HCT116 (cell line): ENCODE measurements at regions of chr5 and their contacts with region 1.

Region 1: GRCh38 chr5:58842852-58843251 is 260.0 kb downstream of the RAB3C start:
- DNase-seq: no peak
- ATAC-seq: no peak
- H3K4me3 ChIP-seq: no peak overlapping the region
- H3K27ac ChIP-seq: no peak overlapping the region
- H3K4me1 ChIP-seq: no peaks in the 10 kb centered on the region
- H3K27me3 ChIP-seq: no peaks in the 10 kb centered on the region
- CTCF ChIP-seq: no peak
- POLR2A ChIP-seq: no peak
- RAD21 ChIP-seq: no peak

Region 2: DNA sequence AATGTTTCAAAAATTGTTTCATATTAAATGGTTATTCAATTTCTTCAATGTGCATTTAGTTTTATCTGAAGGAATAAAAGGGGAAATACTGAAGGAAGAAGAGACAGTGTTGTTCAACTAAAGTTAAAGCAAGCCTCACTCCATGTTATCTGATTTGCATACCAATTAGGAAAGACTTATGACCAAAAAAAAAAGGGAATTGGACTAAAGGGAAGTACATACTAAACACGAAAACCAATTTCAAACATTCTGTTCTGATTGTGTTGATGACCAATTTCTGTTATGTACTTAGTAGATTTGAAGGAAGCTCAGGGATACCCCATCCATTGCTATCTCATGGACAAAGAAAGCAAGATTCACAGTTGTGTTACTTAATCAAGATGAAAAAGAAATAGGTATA is 356.6 kb before region 1 on chr5:
- CTCF ChIA-PET with region 1: no interaction called
- POLR2A ChIA-PET with region 1: no interaction called
- RAD21 ChIA-PET with region 1: no interaction called
- intact Hi-C with region 1: loop called (anchors 5 kb)
- DNase-seq: no peak
- ATAC-seq: no peak
- H3K4me3 ChIP-seq: no peak overlapping the region
- H3K27ac ChIP-seq: no peak overlapping the region
- H3K4me1 ChIP-seq: no peaks in the 10 kb centered on the region
- H3K27me3 ChIP-seq: peaks cover 11% of the 10 kb centered on the region; the same call in 1 of the 2 replicates
- CTCF ChIP-seq: no peak
- POLR2A ChIP-seq: no peak
- RAD21 ChIP-seq: no peak

Region 3: DNA sequence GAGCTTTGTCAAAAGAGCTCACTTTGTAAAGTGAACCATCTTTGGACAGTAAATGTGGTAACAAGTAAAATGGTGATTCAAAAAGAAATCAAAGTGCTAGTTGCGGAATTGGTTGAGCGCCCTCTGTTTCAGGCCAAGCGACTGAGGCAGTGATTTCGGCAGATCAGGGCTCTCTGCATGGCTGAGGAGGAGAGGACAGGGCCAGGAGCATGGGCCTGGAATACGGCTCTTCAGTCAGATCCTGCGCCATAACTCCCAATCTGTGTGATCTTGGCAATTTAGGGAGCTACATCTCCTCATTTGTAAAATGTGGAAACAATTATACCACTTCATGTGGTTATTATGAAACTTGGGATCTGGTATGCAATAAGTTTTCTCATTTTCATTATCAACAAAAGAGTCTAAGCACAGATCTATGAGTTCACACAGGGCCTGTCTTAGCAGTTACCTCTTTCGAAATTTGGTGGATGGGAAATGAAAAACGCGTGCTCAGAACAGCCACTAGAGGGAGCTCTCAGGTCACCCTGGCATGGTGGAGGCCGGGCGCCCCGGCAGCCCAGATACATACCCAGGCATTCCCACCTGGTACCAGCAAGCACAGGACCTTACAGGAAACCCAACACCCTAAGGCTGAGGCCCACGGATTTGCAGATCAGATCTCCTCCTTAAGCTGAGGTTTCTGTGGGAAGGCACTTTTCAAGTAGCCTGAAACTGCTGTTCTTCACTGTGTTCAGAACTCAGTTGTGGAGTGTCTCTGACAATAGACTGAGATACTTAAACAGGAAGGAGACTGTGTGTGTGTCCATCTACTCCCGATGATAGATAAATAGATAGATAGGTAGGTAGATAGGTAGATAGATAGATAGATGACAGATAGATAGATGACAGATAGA is 43.7 kb after region 1 on chr5:
- CTCF ChIA-PET with region 1: no interaction called
- POLR2A ChIA-PET with region 1: no interaction called
- RAD21 ChIA-PET with region 1: no interaction called
- intact Hi-C with region 1: no loop called
- DNase-seq: peak; percentile 28
- ATAC-seq: peak; percentile 97
- H3K4me3 ChIP-seq: no peak overlapping the region
- H3K27ac ChIP-seq: no peak overlapping the region
- H3K4me1 ChIP-seq: no peaks in the 10 kb centered on the region
- H3K27me3 ChIP-seq: no peaks in the 10 kb centered on the region
- CTCF ChIP-seq: peak; percentile 39 to 95 (median 87); a peak in 5 of 6 replicates
- POLR2A ChIP-seq: no peak
- RAD21 ChIP-seq: peak; percentile 66